Activated CD4-positive, alpha-beta memory T cell treated with anti-CD3 and anti-CD28 coated beads for 36 hours (primary cell): ENCODE measurements at regions of chr6 and their contacts with region 1.

Region 1: GRCh38 chr6:164942271-164942765 is 367.1 kb downstream of the C6orf118 start:
- DNase-seq: no peak
- H3K4me3 Mint-ChIP-seq: no peak overlapping the region
- H3K27ac Mint-ChIP-seq: no peak overlapping the region
- H3K4me1 Mint-ChIP-seq: no peaks in the 10 kb centered on the region
- H3K27me3 Mint-ChIP-seq: no peaks in the 10 kb centered on the region

Region 2: GRCh38 chr6:164898412-164898811 is 43.9 kb before region 1 on chr6:
- CTCF ChIA-PET with region 1: no interaction called
- POLR2A ChIA-PET with region 1: no interaction called
- intact Hi-C with region 1: no loop called
- DNase-seq: no peak
- H3K4me3 Mint-ChIP-seq: no peak overlapping the region
- H3K27ac Mint-ChIP-seq: no peak overlapping the region
- H3K4me1 Mint-ChIP-seq: no peaks in the 10 kb centered on the region
- H3K27me3 Mint-ChIP-seq: no peaks in the 10 kb centered on the region

Region 3: DNA sequence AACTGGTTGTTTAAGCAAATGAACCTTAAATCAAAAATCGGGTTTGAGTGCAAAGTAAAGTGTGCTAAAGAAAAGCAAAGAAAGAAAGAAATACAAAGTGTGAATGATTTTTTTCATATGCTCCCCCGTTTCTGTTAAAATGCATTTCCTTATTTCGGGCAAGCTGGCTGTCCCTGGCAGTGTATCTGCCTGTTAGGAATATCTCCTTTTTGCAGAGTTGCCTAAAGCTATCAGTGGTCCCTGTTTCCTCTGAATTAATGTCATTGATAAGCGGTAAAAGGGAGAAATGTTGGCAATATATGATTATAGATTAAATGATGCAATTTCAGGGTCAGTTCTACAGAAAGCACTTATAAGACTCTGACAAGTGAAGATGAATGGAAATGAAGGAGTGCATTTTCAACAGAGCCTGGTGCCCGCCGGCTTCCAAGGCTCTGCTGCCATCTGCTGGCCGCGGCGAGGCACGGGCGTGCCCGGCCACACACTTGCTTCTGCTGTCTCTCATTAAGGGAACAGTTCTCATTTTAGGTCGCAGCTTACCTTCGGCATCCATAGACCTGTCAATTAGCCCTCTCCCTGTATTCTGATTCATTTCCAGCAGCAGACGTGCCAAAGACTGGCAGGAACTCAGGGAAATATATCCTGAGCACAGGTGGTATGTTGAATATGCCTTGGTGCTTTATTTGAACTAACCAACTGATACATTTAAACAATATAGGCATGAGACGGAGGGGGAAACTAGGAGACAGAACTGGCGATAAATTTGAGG is 14.8 kb before region 1 on chr6:
- CTCF ChIA-PET with region 1: interaction called, 16 read pairs
- POLR2A ChIA-PET with region 1: no interaction called
- intact Hi-C with region 1: no loop called
- DNase-seq: peak; percentile 67
- H3K4me3 Mint-ChIP-seq: no peak overlapping the region
- H3K27ac Mint-ChIP-seq: no peak overlapping the region
- H3K4me1 Mint-ChIP-seq: no peaks in the 10 kb centered on the region
- H3K27me3 Mint-ChIP-seq: no peaks in the 10 kb centered on the region